Colonic mucosa (tissue), 4 donors: ENCODE measurements at regions of chr14 and their contacts with region 1.

Region 1: DNA sequence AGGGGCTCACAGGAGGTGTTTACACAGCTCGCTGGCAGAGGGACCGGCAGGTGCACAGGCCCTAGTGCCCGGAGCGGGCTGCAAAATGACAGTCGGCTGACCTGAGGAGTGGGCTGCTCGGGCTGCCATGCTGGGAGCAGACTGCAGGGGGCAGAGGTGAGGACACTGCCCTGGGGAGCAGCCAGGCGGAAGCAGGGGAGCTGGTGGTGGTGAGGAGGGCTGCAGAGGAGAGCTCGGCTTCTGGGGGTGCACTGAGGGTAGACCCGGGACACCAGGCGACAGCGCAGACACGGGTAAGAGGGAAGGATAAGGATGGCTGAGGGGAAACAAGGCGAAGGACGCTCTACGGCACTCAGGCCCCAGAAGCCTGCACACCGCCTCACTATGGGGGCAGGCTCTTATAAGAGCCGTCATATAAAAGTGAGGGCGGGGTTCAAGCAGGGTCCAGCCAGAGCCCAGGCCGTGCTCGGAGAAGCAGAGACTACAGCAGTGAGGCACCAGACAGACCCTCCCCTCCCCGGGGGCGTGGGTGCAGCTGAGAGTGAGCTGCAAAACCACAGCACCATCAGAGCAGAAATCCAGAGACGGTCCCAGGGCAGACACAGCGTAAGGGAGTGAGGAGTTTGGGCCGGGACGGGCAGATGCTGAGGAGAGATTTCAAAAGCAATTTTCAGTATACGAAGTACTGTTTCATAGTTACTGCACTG is 62.5 kb downstream of the CCDC88C start:
- DNase-seq: peak; percentile 56
- H3K4me3 ChIP-seq: no peak overlapping the region
- H3K27ac ChIP-seq: no peak overlapping the region
- H3K4me1 ChIP-seq: no peaks in the 10 kb centered on the region
- H3K27me3 ChIP-seq: no peaks in the 10 kb centered on the region
- CTCF ChIP-seq: peak; percentile 66

Region 2: GRCh38 chr14:91177073-91178034 is 177.8 kb before region 1 on chr14:
- intact Hi-C with region 1: no loop called
- DNase-seq: peak; percentile 49
- H3K4me3 ChIP-seq: no peak overlapping the region
- H3K27ac ChIP-seq: no peak overlapping the region
- H3K4me1 ChIP-seq: no peaks in the 10 kb centered on the region
- H3K27me3 ChIP-seq: no peaks in the 10 kb centered on the region
- CTCF ChIP-seq: peak; percentile 66

Region 3: GRCh38 chr14:91330856-91331587 is 24.1 kb before region 1 on chr14:
- intact Hi-C with region 1: loop called (anchors 2 kb)
- DNase-seq: no peak
- H3K4me3 ChIP-seq: no peak overlapping the region
- H3K27ac ChIP-seq: no peak overlapping the region
- H3K4me1 ChIP-seq: peaks cover 7% of the 10 kb centered on the region
- H3K27me3 ChIP-seq: no peaks in the 10 kb centered on the region
- CTCF ChIP-seq: no peak

Region 4: GRCh38 chr14:91418387-91419043 is 63.4 kb after region 1 on chr14:
- intact Hi-C with region 1: loop called (anchors 2 kb)
- DNase-seq: peak; percentile 87
- H3K4me3 ChIP-seq: peak overlapping the region; percentile 39
- H3K27ac ChIP-seq: no peak overlapping the region
- H3K4me1 ChIP-seq: peaks cover 10% of the 10 kb centered on the region
- H3K27me3 ChIP-seq: no peaks in the 10 kb centered on the region
- CTCF ChIP-seq: peak; percentile 99

Region 5: GRCh38 chr14:91501951-91502930 is 147.1 kb after region 1 on chr14:
- intact Hi-C with region 1: no loop called
- DNase-seq: no peak
- H3K4me3 ChIP-seq: no peak overlapping the region
- H3K27ac ChIP-seq: no peak overlapping the region
- H3K4me1 ChIP-seq: peaks cover 8% of the 10 kb centered on the region
- H3K27me3 ChIP-seq: no peaks in the 10 kb centered on the region
- CTCF ChIP-seq: no peak